ENCODE measurements at regions of chr18 and their contacts with region 1.

Region 1: DNA sequence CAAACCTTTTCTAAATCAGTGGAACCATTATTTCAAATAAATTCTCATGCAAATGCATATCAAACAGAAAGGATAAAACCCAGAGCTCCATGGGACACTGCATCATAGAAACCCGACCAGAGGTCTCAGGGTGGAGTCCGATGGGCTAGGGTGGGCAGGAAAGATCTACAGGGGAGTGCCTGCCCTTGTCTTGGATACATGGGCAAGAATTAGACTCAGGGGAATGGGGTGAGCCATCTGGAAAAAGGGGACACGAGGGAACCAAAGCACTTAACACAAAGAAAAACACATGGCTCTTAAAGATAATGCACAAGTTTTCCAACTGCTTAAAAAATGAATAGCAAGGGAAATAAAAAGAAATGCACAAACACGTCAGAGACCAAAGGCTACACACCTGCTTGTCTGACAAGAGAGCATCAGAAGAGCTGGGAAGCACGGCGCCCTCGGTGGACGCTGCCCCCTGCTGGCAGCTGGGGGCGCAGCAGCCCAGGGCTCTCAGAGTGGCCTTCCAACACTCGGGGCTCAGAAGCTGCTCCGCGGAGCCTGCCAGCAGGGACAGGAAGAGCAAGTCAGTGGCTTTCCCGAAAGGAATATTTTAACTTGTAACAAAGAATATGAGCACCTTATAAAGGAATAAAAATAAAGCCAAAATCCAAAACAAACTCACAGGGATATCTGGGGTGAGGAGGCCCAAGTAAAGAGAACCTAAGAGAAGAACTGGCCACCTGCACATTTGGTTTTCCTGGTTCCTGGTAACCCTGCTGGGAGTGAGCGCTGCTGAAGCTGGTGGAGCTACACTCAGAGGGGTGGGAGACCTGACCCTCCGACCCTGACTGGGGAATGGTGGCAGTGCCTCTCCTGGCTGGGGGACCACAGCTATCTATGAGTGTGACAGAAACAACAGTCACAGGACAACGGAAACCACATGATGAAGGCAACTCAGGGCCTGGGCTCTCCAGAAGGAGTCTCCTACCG is 54.5 kb downstream of the SIGLEC15 start:
- DNase-seq: peak; percentile 83
- ATAC-seq: peak; percentile 99
- H3K4me3 Mint-ChIP-seq: no peak overlapping the region
- H3K27ac Mint-ChIP-seq: peak overlapping the region; percentile 58
- H3K4me1 Mint-ChIP-seq: peaks cover 14% of the 10 kb centered on the region
- H3K27me3 Mint-ChIP-seq: no peaks in the 10 kb centered on the region
- CTCF ChIP-seq: peak; percentile 93

Region 2: GRCh38 chr18:45686891-45687611 is 192.9 kb before region 1 on chr18:
- CTCF ChIA-PET with region 1: interaction called, 35 read pairs
- POLR2A ChIA-PET with region 1: no interaction called
- DNase-seq: no peak
- ATAC-seq: peak; percentile 29
- H3K4me3 Mint-ChIP-seq: no peak overlapping the region
- H3K27ac Mint-ChIP-seq: no peak overlapping the region
- H3K4me1 Mint-ChIP-seq: peaks cover 29% of the 10 kb centered on the region
- H3K27me3 Mint-ChIP-seq: no peaks in the 10 kb centered on the region; the same call in 1 of the 2 replicates
- CTCF ChIP-seq: no peak

Region 3: DNA sequence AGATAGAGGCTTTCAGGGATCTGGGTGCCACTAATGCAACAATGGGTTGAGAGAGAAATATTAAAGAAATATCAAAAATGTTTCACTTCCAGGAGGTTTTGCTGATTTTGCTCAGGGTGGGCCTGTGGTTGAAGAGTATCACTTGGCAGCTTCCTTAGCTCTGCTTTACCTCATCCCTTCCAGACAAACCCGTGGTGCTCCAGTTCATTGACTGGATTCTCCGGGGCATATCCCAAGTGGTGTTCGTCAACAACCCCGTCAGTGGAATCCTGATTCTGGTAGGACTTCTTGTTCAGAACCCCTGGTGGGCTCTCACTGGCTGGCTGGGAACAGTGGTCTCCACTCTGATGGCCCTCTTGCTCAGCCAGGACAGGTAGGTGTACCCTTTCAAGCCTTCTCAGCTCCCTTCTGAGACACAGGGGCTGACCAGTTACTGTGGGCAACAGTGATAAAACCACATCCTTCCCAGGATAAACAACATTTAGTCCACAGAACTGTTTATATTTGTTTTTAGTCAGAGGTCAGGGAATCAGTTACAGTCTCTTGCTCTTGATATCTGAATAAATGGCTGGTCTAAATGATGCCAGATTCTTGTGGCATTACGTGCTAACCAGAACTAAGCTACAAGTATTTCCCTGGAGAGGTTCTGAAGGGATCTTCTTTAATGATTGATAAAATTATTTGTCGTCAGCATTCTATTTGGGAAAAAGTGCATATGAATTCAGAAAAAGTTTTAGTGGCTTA is 149.0 kb before region 1 on chr18:
- CTCF ChIA-PET with region 1: interaction called, 35 read pairs
- POLR2A ChIA-PET with region 1: no interaction called
- DNase-seq: no peak
- ATAC-seq: no peak
- H3K4me3 Mint-ChIP-seq: no peak overlapping the region
- H3K27ac Mint-ChIP-seq: no peak overlapping the region
- H3K4me1 Mint-ChIP-seq: peaks cover 25% of the 10 kb centered on the region
- H3K27me3 Mint-ChIP-seq: no peaks in the 10 kb centered on the region
- CTCF ChIP-seq: no peak

Region 4: DNA sequence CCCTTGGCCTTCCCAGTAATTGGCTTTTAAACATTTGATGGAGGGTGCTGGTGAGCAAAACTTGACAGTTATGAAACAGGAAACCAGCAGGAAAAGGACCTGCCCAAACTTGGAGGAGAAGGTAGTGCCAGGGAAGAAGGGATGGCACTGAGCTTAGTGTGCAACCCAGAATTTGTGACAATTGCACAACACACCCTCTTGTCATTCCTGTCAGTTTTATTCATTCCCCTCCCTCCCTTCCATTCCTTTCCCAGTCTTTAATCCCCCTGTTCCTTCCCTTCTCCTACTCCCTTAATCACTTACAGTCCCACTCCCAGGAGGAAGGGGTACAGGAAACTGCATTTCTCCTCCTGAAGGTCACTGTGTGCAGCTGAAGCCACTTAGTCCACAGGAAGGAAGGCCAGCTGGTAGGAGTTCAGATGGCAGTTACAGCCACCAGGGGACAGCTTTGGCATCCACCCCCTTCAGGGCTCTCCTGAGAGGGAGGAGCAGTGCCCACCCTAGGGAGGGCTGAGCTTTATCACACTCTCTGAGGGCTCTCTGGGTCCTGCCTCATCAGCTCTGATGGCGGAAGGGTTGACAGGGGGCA is 78.5 kb before region 1 on chr18:
- CTCF ChIA-PET with region 1: no interaction called
- POLR2A ChIA-PET with region 1: no interaction called
- DNase-seq: no peak
- ATAC-seq: no peak
- H3K4me3 Mint-ChIP-seq: no peak overlapping the region
- H3K27ac Mint-ChIP-seq: no peak overlapping the region
- H3K4me1 Mint-ChIP-seq: peaks cover 3% of the 10 kb centered on the region
- H3K27me3 Mint-ChIP-seq: peaks cover 11% of the 10 kb centered on the region
- CTCF ChIP-seq: no peak

Region 5: DNA sequence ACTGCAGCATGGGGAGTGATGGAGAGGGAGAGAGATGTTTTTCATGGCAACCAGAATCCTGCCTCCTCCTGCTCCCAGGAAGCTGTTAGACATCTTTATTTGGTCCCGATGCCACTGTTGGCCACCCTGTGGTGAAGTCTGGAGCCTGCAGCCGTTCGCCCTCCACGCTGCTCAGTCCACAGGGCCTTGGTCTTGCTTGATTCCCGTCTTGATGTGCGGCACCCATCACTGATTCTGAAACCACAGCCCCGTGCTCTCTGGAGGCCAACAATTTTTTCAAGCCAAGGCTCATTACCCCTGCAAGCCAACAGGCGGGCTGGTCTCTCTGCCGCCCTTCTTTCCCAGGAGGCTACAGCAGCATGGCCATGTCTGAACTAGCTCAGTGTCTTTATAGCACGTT is 29.9 kb before region 1 on chr18:
- CTCF ChIA-PET with region 1: interaction called, 13 read pairs
- POLR2A ChIA-PET with region 1: no interaction called
- DNase-seq: peak; percentile 66
- ATAC-seq: peak; percentile 83
- H3K4me3 Mint-ChIP-seq: no peak overlapping the region
- H3K27ac Mint-ChIP-seq: no peak overlapping the region
- H3K4me1 Mint-ChIP-seq: 0 out of 2 replicates have a peak, but pooled peaks cover 5% of the 10 kb centered on the region
- H3K27me3 Mint-ChIP-seq: no peaks in the 10 kb centered on the region
- CTCF ChIP-seq: peak; percentile 20; the same call in 1 of the 2 replicates

Region 6: GRCh38 chr18:45891806-45892205 is 11.8 kb after region 1 on chr18:
- CTCF ChIA-PET with region 1: interaction called, 16 read pairs
- POLR2A ChIA-PET with region 1: no interaction called
- DNase-seq: no peak
- ATAC-seq: no peak
- H3K4me3 Mint-ChIP-seq: no peak overlapping the region
- H3K27ac Mint-ChIP-seq: no peak overlapping the region
- H3K4me1 Mint-ChIP-seq: no peaks in the 10 kb centered on the region
- H3K27me3 Mint-ChIP-seq: no peaks in the 10 kb centered on the region
- CTCF ChIP-seq: no peak